ENCODE measurements at regions of chr4 and their contacts with region 1.

Region 1: DNA sequence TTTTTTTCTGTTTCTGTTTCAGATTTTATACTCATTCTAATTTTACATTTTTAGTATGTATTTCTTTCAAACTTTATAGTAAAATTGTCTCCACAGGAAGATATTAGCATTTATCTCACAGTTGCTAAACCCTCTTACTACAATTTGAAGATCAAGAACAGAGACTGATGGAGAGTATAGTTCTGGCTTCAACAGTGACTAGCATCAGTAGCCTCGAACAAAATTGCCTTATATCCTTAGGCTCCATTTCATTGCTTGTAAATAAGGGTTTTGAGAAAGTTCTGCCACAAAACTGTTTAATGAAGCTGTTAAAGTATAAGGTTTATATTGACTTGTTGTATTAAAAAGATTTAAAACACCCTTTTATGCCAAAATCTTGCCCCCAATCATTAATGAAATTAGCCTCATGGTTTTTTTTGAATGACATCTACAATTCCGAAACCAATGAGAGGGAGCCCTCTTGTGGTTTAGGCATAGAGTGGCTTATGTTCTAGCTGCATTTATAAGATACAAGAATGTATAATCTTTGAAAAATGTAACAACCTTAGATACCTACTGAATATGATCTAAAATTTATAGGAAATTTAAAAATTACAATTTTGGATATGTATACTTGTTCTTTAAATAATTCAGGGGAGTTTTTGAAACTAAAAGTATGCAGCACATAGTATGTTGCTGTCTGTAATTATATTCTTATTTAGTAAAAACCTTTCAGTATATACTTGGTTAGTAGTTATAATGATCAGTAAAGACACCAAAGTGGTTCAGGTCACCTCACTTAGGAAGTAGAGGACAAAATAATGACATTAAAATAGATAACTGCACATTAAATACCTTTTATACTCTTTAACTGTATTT is 109.8 kb upstream of the HPGD start:
- DNase-seq: no peak
- ATAC-seq: peak; percentile 65

Region 2: GRCh38 chr4:174365018-174365587 is 267.0 kb before region 1 on chr4:
- intact Hi-C with region 1: loop called (anchors 2 to 10 kb)
- DNase-seq: no peak
- ATAC-seq: no peak

Region 3: GRCh38 chr4:174503079-174503715 is 128.9 kb before region 1 on chr4:
- intact Hi-C with region 1: no loop called
- DNase-seq: peak; percentile 27 to 56
- ATAC-seq: peak; percentile 94

Region 4: GRCh38 chr4:174522183-174523048 is 109.7 kb before region 1 on chr4 and contains the start of gene HPGD:
- intact Hi-C with region 1: loop called in 1 of 2 experiments (anchors 10 kb)
- DNase-seq: peak; percentile 80 to 82
- ATAC-seq: peak; percentile 79
- total RNA-seq, gene HPGD: 205 to 208 TPM

Measured in left colon (tissue), 2 donors.